ENCODE measurements at regions of chr5 and their contacts with region 1.

Region 1: DNA sequence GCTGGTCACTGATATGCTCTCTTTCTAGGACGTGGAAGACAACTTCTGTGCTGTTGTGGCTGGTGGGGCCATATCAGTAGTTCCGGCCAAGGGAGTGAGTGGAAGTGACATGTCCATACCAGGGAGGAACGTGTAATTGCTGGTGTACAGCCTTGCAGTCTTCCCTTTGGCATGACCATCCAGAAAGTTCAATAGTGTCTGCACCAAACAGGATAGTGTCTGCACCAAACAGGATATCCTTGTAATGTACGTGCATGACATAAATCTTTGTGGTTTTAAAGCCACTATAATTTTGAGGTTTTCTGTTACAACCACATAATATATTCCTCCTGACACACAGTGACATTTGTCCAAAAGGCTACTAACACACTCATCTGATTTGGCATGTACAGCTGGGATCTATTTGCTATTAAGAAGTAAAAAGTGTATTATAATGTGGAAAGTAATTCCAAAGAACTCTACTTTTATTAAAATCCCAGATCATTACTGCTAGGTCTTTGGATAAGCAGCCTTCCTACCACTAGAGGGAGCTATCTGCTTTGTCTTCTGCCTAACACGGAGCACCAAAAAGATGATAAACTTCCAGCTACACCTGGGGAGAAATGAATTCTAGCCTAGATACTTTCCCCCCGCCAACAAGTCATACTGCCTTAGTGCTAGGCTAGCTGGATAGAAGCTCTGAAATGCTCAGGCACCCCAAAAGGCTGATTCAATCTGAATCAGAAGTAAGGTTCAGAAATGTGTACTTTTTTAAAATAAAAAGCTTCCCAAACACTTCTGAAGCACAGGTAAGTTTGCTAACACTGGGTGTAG is 52.7 kb downstream of the RNF145 start:
- DNase-seq: peak; percentile 65

Region 2: DNA sequence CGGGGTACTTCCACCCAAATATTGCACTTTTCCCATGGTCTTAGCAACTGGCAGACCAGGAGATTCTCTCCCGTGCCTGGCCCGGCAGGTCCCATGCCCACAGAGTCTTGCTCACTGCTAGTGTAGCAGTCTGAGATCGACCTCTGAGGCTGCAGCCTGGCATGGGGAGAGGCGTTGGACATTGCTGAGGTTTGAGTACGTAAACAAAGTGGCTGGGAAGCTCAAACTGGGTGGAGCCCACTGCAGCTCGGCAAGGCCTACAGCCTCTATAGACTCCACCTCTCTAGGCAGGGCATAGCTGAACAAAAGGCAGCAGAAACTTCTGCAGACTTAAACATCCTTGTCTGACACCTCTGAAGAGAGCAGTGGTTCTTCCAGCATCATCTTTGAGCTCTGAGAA is 16.8 kb before region 1 on chr5:
- CTCF ChIA-PET with region 1: no interaction called
- POLR2A ChIA-PET with region 1: no interaction called
- DNase-seq: no peak

Region 3: GRCh38 chr5:159207686-159208513 is 51.3 kb after region 1 on chr5:
- CTCF ChIA-PET with region 1: interaction called, 10 read pairs
- POLR2A ChIA-PET with region 1: no interaction called
- DNase-seq: peak; percentile 68

Region 4: DNA sequence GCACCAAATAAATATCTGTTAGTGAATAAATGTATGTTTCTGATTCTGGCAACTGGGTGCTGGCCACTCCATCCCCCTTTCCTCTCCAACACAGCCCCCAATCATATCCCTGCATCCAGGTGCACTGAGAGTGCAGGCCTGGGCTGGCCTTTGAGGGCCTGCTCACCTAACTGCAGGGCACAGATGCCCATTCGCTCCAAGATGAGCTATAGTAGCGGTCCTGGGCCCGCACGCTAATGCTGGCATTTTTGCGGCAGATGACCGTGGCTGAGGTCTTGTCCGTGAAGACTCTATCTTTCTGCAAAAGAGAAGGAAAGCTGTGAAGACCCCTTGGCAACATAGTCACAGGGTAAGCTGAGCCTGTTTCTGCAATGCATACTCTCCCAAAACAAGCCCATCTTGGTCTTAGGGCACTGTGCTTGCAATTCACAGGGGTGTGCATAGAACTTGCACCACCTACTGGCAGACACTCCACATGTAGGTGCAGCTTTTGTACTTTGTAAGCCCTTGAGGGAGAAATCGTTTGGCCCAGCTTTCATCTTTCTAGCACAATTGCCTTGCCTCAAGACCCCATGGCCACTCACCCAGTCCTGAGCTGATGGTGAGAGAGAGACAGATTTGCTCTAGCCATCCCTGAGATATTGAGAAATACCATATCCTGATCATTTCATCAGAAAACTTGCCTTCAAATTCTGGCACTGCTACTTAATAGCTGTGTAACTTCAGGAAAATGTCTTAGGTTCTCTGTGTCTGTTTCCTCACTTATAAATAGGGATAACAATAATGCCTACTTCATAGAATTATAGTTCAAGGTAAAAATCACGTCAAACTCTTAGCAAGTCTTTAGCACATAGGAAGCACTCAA is 160.1 kb after region 1 on chr5:
- CTCF ChIA-PET with region 1: interaction called, 29 read pairs
- POLR2A ChIA-PET with region 1: no interaction called
- DNase-seq: peak; percentile 64

Measured in HEK293T (cell line).